ENCODE measurements at regions of chr10 and their contacts with region 1.

Region 1: DNA sequence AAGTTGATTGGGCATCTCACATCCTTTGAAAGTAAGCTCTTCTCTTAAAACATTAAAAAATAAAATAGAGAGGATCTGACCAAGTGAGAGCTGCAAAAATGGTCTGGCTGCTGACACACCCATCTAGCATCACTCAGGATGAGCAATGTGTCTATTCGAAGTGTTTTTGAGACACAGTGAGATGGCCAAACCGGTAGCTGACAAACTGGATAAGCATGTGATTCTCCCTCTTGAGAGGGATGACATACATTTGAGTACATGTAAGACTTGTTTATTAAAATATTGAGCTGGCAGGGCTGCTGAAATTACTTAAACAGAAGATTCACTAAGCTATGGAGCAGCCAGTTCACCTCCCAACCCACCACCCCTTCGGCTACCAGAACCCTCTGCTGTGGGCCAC is 333.9 kb downstream of the ADRA2A start:
- DNase-seq: no peak
- ATAC-seq: no peak
- H3K4me3 ChIP-seq: no peak overlapping the region
- H3K4me3 Mint-ChIP-seq: no peak overlapping the region
- H3K27ac ChIP-seq: no peak overlapping the region
- H3K27ac Mint-ChIP-seq: no peak overlapping the region
- H3K4me1 ChIP-seq: no peaks in the 10 kb centered on the region
- H3K4me1 Mint-ChIP-seq: no peaks in the 10 kb centered on the region
- H3K27me3 ChIP-seq: peaks cover 0 to 3% of the 10 kb centered on the region in 2 experiments
- H3K27me3 Mint-ChIP-seq: peaks cover 20% of the 10 kb centered on the region
- CTCF ChIP-seq: no peak

Region 2: DNA sequence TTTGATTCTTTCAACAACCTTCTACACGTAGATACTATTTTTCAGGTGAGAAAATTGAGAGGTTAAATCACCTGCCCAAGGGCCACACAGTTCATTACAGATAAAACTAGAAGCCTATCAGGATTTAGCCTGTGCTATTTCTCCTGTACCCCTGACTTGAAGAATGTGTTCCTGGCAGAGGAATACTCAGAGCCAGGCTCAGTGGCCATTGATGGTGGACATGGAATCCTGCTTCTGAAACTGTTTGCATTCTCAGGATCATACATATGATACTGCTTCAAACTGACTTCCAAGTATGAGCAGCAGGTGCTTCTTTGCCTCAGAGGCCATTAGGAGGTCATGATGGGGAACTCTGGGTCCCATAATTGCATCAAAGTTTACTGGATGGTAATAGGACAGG is 14.7 kb after region 1 on chr10:
- CTCF ChIA-PET with region 1: interaction called, 3 read pairs
- POLR2A ChIA-PET with region 1: no interaction called
- intact Hi-C with region 1: loop called in 1 of 2 experiments (anchors 1 kb)
- DNase-seq: no peak
- ATAC-seq: no peak
- H3K4me3 ChIP-seq: no peak overlapping the region
- H3K4me3 Mint-ChIP-seq: no peak overlapping the region
- H3K27ac ChIP-seq: no peak overlapping the region
- H3K27ac Mint-ChIP-seq: no peak overlapping the region
- H3K4me1 ChIP-seq: no peaks in the 10 kb centered on the region
- H3K4me1 Mint-ChIP-seq: no peaks in the 10 kb centered on the region
- H3K27me3 ChIP-seq: no peaks in the 10 kb centered on the region
- H3K27me3 Mint-ChIP-seq: peaks cover 13% of the 10 kb centered on the region
- CTCF ChIP-seq: no peak

Region 3: GRCh38 chr10:111560027-111560426 is 149.3 kb after region 1 on chr10:
- CTCF ChIA-PET with region 1: no interaction called
- POLR2A ChIA-PET with region 1: no interaction called
- intact Hi-C with region 1: no loop called
- DNase-seq: no peak
- ATAC-seq: no peak
- H3K4me3 ChIP-seq: no peak overlapping the region
- H3K4me3 Mint-ChIP-seq: no peak overlapping the region
- H3K27ac ChIP-seq: no peak overlapping the region
- H3K27ac Mint-ChIP-seq: no peak overlapping the region
- H3K4me1 ChIP-seq: no peaks in the 10 kb centered on the region
- H3K4me1 Mint-ChIP-seq: no peaks in the 10 kb centered on the region
- H3K27me3 ChIP-seq: no peaks in the 10 kb centered on the region
- H3K27me3 Mint-ChIP-seq: peaks cover 3% of the 10 kb centered on the region
- CTCF ChIP-seq: no peak